Activated naive CD4-positive, alpha-beta T cell treated with anti-CD3 and anti-CD28 coated beads for 36 hours (primary cell): ENCODE measurements at regions of chr7 and their contacts with region 1.

Region 1: DNA sequence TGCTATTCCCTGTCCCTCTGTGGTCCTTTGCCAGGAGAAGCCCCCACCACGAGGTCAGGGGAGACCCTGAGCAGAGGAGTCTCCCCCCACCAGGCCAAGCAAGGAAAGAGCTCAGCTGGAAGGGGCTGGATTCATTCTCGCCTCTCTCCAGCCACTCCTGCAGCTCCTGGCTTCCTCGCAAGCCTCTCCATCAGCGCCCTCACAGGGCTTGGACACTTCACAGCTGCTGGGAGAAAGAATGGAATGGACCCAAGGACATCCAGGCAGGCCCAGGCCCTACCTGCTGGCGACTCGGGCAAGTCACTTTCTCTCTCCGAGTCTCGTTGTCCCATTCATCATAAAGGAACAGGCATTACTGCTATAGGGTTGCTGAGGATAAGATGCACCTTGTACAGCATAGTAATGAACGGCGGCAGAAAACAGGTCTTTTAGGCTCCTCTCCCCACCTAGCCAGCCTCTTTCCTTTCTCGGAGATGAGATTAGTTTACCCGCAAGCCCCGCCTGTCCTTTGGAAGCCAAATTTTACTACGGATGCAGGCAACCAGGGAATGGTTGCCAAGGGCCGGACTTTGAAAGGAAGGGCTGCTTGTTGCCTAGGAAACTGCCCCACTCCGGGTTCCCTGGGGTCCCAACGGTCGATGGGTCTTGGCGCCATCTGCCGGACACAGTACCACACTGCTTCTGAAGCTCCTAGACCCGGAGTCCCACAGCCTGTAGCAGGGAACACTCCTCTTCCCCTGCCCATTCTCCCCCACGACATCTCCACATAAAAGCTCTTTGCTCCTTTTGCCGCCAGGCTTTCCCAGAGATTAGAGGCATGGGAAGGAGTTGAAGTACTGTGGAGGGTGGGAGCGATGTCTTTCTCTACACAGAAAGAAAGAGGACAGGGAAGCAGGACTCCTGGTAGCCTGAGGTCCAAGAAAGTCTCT is 22.3 kb downstream of the IMPDH1 start:
- DNase-seq: peak; percentile 80
- H3K4me3 Mint-ChIP-seq: no peak overlapping the region
- H3K27ac Mint-ChIP-seq: no peak overlapping the region
- H3K4me1 Mint-ChIP-seq: no peaks in the 10 kb centered on the region
- H3K27me3 Mint-ChIP-seq: no peaks in the 10 kb centered on the region

Region 2: GRCh38 chr7:128353189-128353588 is 34.3 kb before region 1 on chr7:
- CTCF ChIA-PET with region 1: interaction called, 297 read pairs
- intact Hi-C with region 1: no loop called
- DNase-seq: no peak
- H3K4me3 Mint-ChIP-seq: no peak overlapping the region
- H3K27ac Mint-ChIP-seq: no peak overlapping the region
- H3K4me1 Mint-ChIP-seq: peaks cover 2% of the 10 kb centered on the region
- H3K27me3 Mint-ChIP-seq: peaks cover 27% of the 10 kb centered on the region

Region 3: GRCh38 chr7:128361411-128362379 is 25.8 kb before region 1 on chr7 and contains the start of gene PRRT4:
- CTCF ChIA-PET with region 1: interaction called, 12 read pairs
- intact Hi-C with region 1: no loop called
- DNase-seq: peak; percentile 42
- H3K4me3 Mint-ChIP-seq: peak within 1 kb of the TSS; percentile 73
- H3K27ac Mint-ChIP-seq: no peak within 1 kb of the TSS
- H3K4me1 Mint-ChIP-seq: peaks cover 22% of the 10 kb centered on the region
- H3K27me3 Mint-ChIP-seq: peaks cover 46% of the 10 kb centered on the region
- total RNA-seq, gene PRRT4: 0.40 TPM in 1 of 2 experiments, not detected in the other

Region 4: GRCh38 chr7:128373606-128374005 is 13.9 kb before region 1 on chr7:
- CTCF ChIA-PET with region 1: interaction called, 32 read pairs
- intact Hi-C with region 1: no loop called
- DNase-seq: no peak
- H3K4me3 Mint-ChIP-seq: no peak overlapping the region
- H3K27ac Mint-ChIP-seq: no peak overlapping the region
- H3K4me1 Mint-ChIP-seq: no peaks in the 10 kb centered on the region
- H3K27me3 Mint-ChIP-seq: peaks cover 6% of the 10 kb centered on the region

Region 5: DNA sequence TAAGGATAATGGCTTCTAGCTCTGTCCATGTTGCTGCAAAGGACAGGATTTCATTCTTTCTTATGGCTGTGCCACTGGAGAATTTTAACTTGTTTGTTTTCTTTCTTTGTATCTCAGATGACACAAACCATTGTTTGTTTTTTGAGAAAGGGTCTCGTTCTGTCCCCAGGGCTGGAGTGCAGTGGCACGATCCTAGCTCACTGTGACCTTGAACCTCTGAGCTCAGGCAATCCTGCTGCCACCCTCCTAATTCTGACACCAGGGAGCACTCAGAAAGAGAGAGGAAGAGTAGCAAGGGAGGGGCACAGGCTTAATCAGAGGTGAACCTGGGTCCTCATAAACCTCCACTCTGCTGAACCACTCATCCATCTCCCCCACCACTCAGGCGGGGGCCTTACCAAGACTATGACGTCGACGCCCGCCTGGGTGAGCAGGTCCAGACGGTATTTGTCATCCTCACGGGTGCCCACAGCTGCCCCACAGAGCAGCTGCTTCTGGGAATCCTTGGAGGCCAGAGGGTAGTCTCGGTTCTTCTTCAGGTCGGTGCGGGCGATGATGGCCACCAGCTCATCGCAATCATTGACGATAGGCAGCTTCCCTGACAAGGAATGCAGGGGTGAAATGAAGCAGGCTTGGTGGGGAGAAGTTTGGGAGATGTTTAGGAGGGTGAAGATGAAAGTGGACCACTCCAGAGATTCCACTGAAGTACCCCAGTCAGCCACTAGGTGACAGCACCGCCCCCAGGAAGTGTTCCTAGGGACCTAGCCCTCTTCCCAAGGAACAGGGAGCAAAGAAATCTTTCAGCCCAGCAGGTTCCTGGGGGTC is 10.7 kb after region 1 on chr7:
- CTCF ChIA-PET with region 1: interaction called, 17 read pairs
- intact Hi-C with region 1: no loop called
- DNase-seq: peak; percentile 65
- H3K4me3 Mint-ChIP-seq: no peak overlapping the region
- H3K27ac Mint-ChIP-seq: no peak overlapping the region
- H3K4me1 Mint-ChIP-seq: peaks cover 7% of the 10 kb centered on the region
- H3K27me3 Mint-ChIP-seq: no peaks in the 10 kb centered on the region